MCF 10A (cell line): ENCODE measurements at regions of chr16 and their contacts with region 1.

Region 1: GRCh38 chr16:54277845-54278703 is 8.5 kb downstream of the IRX3 start:
- DNase-seq: no peak
- H3K4me3 Mint-ChIP-seq: no peak overlapping the region
- H3K27ac Mint-ChIP-seq: no peak overlapping the region
- H3K4me1 Mint-ChIP-seq: peaks cover 11% of the 10 kb centered on the region
- H3K27me3 Mint-ChIP-seq: no peaks in the 10 kb centered on the region
- CTCF ChIP-seq: no peak

Region 2: GRCh38 chr16:54125751-54126655 is 152.1 kb before region 1 on chr16:
- CTCF ChIA-PET with region 1: no interaction called
- POLR2A ChIA-PET with region 1: no interaction called
- intact Hi-C with region 1: no loop called
- DNase-seq: no peak
- H3K4me3 Mint-ChIP-seq: no peak overlapping the region
- H3K27ac Mint-ChIP-seq: no peak overlapping the region
- H3K4me1 Mint-ChIP-seq: no peaks in the 10 kb centered on the region
- H3K27me3 Mint-ChIP-seq: no peaks in the 10 kb centered on the region
- CTCF ChIP-seq: no peak

Region 3: GRCh38 chr16:54266363-54266955 is 11.6 kb before region 1 on chr16:
- CTCF ChIA-PET with region 1: interaction called, 7 read pairs
- POLR2A ChIA-PET with region 1: interaction called, 11 read pairs
- intact Hi-C with region 1: no loop called
- DNase-seq: peak; percentile 84
- H3K4me3 Mint-ChIP-seq: peak overlapping the region; percentile 25
- H3K27ac Mint-ChIP-seq: peak overlapping the region; percentile 32
- H3K4me1 Mint-ChIP-seq: peaks cover 12% of the 10 kb centered on the region
- H3K27me3 Mint-ChIP-seq: no peaks in the 10 kb centered on the region
- CTCF ChIP-seq: no peak

Region 4: GRCh38 chr16:54373534-54374520 is 95.8 kb after region 1 on chr16:
- CTCF ChIA-PET with region 1: no interaction called
- POLR2A ChIA-PET with region 1: no interaction called
- intact Hi-C with region 1: no loop called
- DNase-seq: peak; percentile 75
- H3K4me3 Mint-ChIP-seq: no peak overlapping the region
- H3K27ac Mint-ChIP-seq: no peak overlapping the region
- H3K4me1 Mint-ChIP-seq: no peaks in the 10 kb centered on the region
- H3K27me3 Mint-ChIP-seq: no peaks in the 10 kb centered on the region
- CTCF ChIP-seq: no peak